ENCODE measurements at regions of chr10 and their contacts with region 1.

Region 1: DNA sequence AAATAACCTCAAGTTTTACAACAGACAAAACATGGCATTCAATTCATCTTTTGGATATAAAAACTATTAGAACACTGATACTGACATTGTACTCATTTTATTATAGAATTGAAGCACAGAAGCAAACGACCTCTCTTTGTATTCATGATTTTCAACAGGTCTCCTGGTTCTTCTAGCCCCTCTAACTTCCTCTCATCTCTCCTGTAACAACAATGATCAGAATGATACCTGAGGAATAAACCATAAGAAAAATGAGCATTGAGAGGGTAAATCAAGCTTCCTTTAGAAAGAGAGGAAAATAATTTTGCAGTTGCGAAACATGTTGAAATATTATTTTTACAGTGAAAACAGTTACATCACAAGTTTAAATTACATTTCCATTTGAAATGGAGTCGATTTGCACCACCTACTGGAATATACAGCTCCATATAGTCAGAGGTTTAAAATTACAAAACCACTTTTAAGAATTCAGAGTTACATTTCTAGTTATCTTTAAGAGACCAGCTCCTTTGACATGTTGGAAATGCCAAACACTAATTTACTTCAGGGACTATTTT is 17.5 kb upstream of the TEX36 start:
- DNase-seq: no peak
- ATAC-seq: no peak
- H3K4me3 ChIP-seq: no peak overlapping the region
- H3K27ac ChIP-seq: no peak overlapping the region
- H3K4me1 ChIP-seq: no peaks in the 10 kb centered on the region
- H3K27me3 ChIP-seq: peaks cover 0 to 5% (median 0%) of the 10 kb centered on the region in 9 donors
- CTCF ChIP-seq: no peak
- POLR2A ChIP-seq: no peak

Region 2: GRCh38 chr10:125316449-125316848 is 384.0 kb before region 1 on chr10:
- intact Hi-C with region 1: loop called in 1 of 10 experiments (anchors 5 kb)
- DNase-seq: no peak
- ATAC-seq: no peak
- H3K4me3 ChIP-seq: no peak overlapping the region
- H3K27ac ChIP-seq: no peak overlapping the region
- H3K4me1 ChIP-seq: no peaks in the 10 kb centered on the region
- H3K27me3 ChIP-seq: no peaks in the 10 kb centered on the region
- CTCF ChIP-seq: no peak
- POLR2A ChIP-seq: no peak

Region 3: DNA sequence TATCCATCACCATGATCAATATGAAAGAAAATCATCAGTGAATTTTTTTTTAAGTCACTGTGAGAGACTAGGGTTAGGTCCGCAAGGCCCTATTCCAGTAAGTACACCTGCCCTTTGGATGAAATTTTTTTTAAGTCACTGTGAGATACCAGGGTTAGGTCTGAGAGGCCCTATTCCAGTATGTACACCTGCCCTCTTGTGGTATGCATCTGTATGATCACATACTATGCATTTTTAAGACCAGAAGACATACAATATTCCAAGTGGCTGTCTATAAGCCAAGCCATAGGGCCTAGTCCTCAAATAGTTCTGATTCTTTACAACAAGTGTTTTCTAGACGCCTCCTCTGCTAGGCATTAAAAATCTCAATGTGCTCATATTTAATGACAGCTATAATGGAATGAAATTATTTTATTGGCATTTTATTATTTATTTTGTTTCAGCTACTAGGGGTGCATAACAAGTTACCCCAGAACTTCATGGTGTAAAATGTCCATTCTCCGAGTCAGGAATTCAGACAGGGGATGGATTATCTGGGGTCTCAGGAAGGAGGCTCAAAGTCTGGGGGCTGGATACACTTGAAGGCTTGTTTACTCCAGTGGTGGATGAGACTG is 70.6 kb before region 1 on chr10:
- intact Hi-C with region 1: no loop called
- DNase-seq: no peak
- ATAC-seq: no peak
- H3K4me3 ChIP-seq: no peak overlapping the region
- H3K27ac ChIP-seq: no peak overlapping the region
- H3K4me1 ChIP-seq: no peaks in the 10 kb centered on the region
- H3K27me3 ChIP-seq: peaks cover 0 to 19% (median 0%) of the 10 kb centered on the region in 9 donors
- CTCF ChIP-seq: peak in 3 of 12 donors; percentile 6 to 28 (median 24)
- POLR2A ChIP-seq: no peak

Measured in heart left ventricle (tissue), 16 donors.